Right cardiac atrium (tissue), 5 donors: ENCODE measurements at regions of chrX and their contacts with region 1.

Region 1: GRCh38 chrX:50691820-50692219 is 122.2 kb downstream of the SHROOM4 start:
- DNase-seq: no peak
- ATAC-seq: peak; percentile 43 to 78
- H3K4me3 ChIP-seq: no peak overlapping the region
- H3K27ac ChIP-seq: no peak overlapping the region
- H3K4me1 ChIP-seq: no peaks in the 10 kb centered on the region
- H3K27me3 ChIP-seq: no peaks in the 10 kb centered on the region

Region 2: GRCh38 chrX:50456712-50457484 is 234.9 kb before region 1 on chrX:
- intact Hi-C with region 1: no loop called
- DNase-seq: no peak
- ATAC-seq: no peak
- H3K4me3 ChIP-seq: no peak overlapping the region
- H3K27ac ChIP-seq: no peak overlapping the region
- H3K4me1 ChIP-seq: no peaks in the 10 kb centered on the region
- H3K27me3 ChIP-seq: no peaks in the 10 kb centered on the region

Region 3: DNA sequence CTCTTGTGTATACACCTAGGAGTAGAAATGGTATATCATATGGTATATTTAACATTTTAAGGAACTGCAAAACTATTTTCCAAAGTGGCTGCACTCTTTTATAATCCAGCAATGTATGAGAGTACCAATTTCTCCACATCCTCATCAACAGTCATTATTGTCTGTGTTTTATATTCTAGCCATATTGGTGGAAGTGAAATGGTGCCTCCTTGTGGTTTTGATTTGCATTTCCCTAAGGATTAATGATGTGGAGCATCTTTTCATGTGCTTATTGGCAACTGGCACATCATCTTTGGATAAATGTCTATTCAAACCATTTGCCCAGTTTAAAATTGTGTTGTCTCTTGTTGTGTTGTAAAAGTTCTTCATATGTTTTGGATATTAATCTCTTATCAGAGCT is 228.3 kb after region 1 on chrX:
- intact Hi-C with region 1: no loop called
- DNase-seq: no peak
- ATAC-seq: no peak
- H3K4me3 ChIP-seq: no peak overlapping the region
- H3K27ac ChIP-seq: no peak overlapping the region
- H3K4me1 ChIP-seq: no peaks in the 10 kb centered on the region
- H3K27me3 ChIP-seq: no peaks in the 10 kb centered on the region

Region 4: DNA sequence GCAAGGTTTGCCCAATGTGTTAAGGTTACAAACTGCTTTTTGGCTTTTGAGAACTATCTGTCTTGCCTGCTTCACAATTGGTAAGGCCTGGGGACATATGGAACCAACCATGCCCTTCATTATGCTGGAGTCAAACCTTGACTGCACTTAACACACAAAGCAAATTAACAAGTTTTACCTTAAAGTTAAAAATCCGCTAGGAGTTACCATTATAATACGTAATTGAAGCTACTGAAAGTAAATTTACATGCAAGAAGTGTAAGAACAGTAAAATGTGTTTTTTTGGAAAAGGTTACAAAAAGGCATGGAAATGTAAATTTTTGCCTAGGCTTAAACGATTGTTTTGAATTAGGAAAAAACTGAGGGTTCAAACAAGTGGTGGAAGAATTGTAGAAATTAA is 288.4 kb after region 1 on chrX:
- intact Hi-C with region 1: loop called (anchors 5 to 10 kb)
- DNase-seq: no peak
- ATAC-seq: no peak
- H3K4me3 ChIP-seq: no peak overlapping the region
- H3K27ac ChIP-seq: no peak overlapping the region
- H3K4me1 ChIP-seq: no peaks in the 10 kb centered on the region
- H3K27me3 ChIP-seq: no peaks in the 10 kb centered on the region

Region 5: DNA sequence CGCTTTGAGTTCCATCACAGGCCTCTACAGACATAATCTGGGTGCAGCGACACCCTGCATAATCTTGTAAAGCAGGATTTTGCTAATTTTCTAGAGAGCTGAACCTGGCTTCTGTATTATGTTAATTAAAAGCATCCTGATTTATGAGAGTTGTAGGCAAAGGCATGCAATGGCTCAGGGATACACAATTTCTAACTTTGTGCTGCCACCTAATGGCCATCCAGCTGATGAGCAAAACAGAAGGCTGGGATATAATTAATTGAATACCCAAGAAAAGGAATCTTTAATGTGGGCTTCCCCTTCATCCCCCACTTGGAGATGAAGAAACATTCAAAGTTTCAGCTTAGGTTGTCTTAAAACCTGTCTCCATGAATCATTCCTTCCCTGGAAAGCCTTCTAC is 296.8 kb after region 1 on chrX:
- intact Hi-C with region 1: loop called (anchors 5 to 10 kb)
- DNase-seq: no peak
- ATAC-seq: peak in 1 of 2 donors; percentile 41
- H3K4me3 ChIP-seq: no peak overlapping the region
- H3K27ac ChIP-seq: no peak overlapping the region
- H3K4me1 ChIP-seq: no peaks in the 10 kb centered on the region
- H3K27me3 ChIP-seq: no peaks in the 10 kb centered on the region